ENCODE measurements at regions of chr20 and their contacts with region 1.

Region 1: GRCh38 chr20:4014031-4014474 is 1.3 kb downstream of the RNF24 start:
- H3K4me3 ChIP-seq: peak overlapping the region; percentile 77; the same call in 1 of the 2 replicates
- H3K27ac ChIP-seq: no peak overlapping the region
- H3K4me1 ChIP-seq: peaks cover 13% of the 10 kb centered on the region
- CTCF ChIP-seq: peak; percentile 77

Region 2: DNA sequence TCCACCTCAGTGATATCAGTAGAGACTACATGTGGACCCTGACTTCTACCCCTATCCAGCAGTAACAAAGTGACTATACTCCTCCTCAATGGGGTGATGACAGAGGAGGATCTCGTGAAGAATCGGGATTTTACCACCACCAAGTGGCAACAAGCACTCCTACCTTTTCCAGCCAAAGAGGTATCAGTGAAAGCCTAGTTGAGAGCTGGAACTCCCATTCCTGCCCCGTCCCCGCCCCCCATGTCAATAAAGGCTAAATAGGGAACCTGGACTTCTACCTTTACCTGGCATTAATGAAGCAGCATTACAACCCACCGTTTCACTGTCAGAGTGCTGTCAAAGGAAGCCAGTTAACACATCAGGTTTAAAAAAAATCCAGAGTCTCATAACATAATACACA is 44.0 kb before region 1 on chr20:
- CTCF ChIA-PET with region 1: no interaction called
- POLR2A ChIA-PET with region 1: no interaction called
- H3K4me3 ChIP-seq: no peak overlapping the region
- H3K27ac ChIP-seq: no peak overlapping the region
- H3K4me1 ChIP-seq: no peaks in the 10 kb centered on the region
- CTCF ChIP-seq: no peak

Region 3: DNA sequence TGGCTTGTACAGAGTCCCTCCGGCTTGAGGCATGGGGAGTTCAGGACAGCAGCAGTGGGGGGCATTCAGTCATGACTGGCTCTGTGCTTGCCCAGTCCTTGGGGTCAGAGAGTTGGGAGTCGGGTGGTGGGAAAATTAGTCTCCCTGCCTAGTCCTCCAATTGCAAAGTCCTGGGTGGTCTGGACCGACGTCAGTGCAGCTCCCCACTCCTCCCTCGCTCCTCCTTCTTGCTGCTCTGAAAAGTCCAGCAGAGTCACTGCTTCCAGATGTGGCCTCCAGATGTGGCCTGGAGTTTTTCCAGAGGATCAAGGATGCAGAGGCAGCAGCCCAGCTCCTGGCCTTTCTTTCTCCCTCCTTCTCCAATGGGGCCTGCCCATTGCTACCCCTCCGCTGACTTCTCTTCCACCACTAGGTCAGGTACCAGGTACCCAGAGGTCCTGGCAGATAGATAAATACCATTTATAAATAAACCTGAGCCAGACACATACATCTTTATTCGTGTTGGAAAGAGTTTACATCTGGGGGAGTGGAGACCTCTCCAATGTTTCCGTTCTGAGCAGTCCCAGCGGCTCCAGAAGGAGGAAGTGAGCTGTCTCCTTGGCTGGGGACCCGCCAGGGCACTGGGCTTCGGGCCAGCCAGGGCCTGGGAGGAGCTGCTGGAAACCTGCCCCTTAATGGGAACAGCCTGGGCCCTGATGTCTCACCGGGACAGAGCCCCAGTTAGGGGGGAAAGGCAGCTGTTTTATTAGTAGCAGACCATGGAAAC is 50.3 kb after region 1 on chr20:
- CTCF ChIA-PET with region 1: interaction called, 11 read pairs
- POLR2A ChIA-PET with region 1: interaction called, 4 read pairs
- H3K4me3 ChIP-seq: no peak overlapping the region
- H3K27ac ChIP-seq: 0 out of 2 replicates have a peak overlapping the region, but pooled peaks have one; percentile 5
- H3K4me1 ChIP-seq: peaks cover 4% of the 10 kb centered on the region
- CTCF ChIP-seq: no peak

Region 4: DNA sequence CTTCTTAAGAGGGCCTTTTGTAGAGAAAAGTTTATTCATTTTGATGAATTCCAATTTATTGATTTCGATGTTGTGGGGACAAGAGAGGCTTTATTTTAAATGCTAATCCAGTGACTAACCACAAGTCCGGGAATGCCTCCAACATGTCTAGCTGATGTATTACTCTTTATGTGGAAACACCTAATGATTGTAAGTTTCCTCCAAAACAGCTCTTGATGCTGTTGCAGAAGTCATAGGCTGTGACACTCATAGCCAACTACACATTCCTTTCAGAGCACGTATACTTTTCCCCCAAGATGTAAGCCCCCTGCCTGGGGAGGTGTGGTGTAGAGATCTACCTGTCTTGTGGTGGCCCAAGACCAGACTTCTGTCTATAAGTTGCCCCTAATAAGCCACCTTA is 62.6 kb after region 1 on chr20:
- CTCF ChIA-PET with region 1: interaction called, 90 read pairs
- POLR2A ChIA-PET with region 1: interaction called, 3 read pairs
- H3K4me3 ChIP-seq: no peak overlapping the region
- H3K27ac ChIP-seq: no peak overlapping the region
- H3K4me1 ChIP-seq: no peaks in the 10 kb centered on the region
- CTCF ChIP-seq: no peak

Region 5: GRCh38 chr20:4082406-4083097 is 68.5 kb after region 1 on chr20:
- CTCF ChIA-PET with region 1: interaction called, 36 read pairs
- POLR2A ChIA-PET with region 1: interaction called, 5 read pairs
- H3K4me3 ChIP-seq: no peak overlapping the region
- H3K27ac ChIP-seq: no peak overlapping the region
- H3K4me1 ChIP-seq: peaks cover 4% of the 10 kb centered on the region; the same call in 1 of the 2 replicates
- CTCF ChIP-seq: no peak

Region 6: DNA sequence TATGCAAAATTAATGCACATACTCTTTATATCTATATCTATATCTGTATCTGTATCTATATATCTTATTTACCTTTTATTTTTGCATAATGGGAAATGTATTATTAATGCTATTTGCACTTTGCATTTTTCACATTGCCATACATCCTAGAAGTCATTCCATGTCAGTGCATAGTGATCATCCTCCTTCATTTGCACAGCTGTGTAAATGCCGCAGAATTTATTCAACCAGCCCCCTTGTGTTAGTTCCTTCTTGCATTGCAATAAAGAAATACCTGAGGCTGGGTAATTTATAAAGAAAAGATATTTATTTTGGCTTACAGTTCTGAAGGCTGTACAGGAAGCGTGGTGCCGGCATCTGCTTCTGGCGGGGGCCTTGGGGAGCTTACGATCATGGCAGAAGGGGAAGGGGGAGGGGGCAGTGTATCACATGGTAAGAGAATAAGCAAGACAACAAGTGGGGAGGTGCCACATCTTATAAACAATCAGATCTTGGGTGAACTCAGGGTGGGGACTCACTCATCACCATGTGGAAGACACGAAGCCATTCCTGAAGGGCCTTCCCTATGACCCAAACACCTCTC is 103.2 kb after region 1 on chr20:
- CTCF ChIA-PET with region 1: no interaction called
- POLR2A ChIA-PET with region 1: no interaction called
- H3K4me3 ChIP-seq: no peak overlapping the region
- H3K27ac ChIP-seq: no peak overlapping the region
- H3K4me1 ChIP-seq: no peaks in the 10 kb centered on the region; the same call in 1 of the 2 replicates
- CTCF ChIP-seq: no peak